Heart right ventricle (tissue), 16 donors: ENCODE measurements at regions of chr11 and their contacts with region 1.

Region 1: GRCh38 chr11:10857709-10858438 is at the start of gene ZBED5:
- DNase-seq: peak; percentile 97
- ATAC-seq: peak; percentile 96 to 98 (median 97)
- H3K4me3 ChIP-seq: peak within 1 kb of the TSS; percentile 70 to 89 (median 84)
- H3K27ac ChIP-seq: peak within 1 kb of the TSS; percentile 90 to 99 (median 98)
- H3K4me1 ChIP-seq: peaks cover 0 to 57% (median 26%) of the 10 kb centered on the region in 9 donors
- H3K27me3 ChIP-seq: no peaks in the 10 kb centered on the region
- CTCF ChIP-seq: peak in 7 of 9 donors; percentile 8 to 41 (median 20)
- total RNA-seq, gene ZBED5: 31.4 to 46.3 (median 39.6) TPM

Region 2: GRCh38 chr11:10800292-10800691 is 57.6 kb before region 1 on chr11:
- intact Hi-C with region 1: loop called in 2 of 10 experiments (anchors 5 to 10 kb)
- DNase-seq: no peak
- ATAC-seq: no peak
- H3K4me3 ChIP-seq: no peak overlapping the region
- H3K27ac ChIP-seq: no peak overlapping the region
- H3K4me1 ChIP-seq: peaks cover 3 to 83% (median 42%) of the 10 kb centered on the region in 9 donors
- H3K27me3 ChIP-seq: no peaks in the 10 kb centered on the region
- CTCF ChIP-seq: no peak

Region 3: GRCh38 chr11:10818594-10818993 is 39.3 kb before region 1 on chr11:
- intact Hi-C with region 1: no loop called
- DNase-seq: no peak
- ATAC-seq: no peak
- H3K4me3 ChIP-seq: no peak overlapping the region
- H3K27ac ChIP-seq: no peak overlapping the region
- H3K4me1 ChIP-seq: peaks cover 0 to 6% (median 0%) of the 10 kb centered on the region in 9 donors
- H3K27me3 ChIP-seq: no peaks in the 10 kb centered on the region
- CTCF ChIP-seq: no peak

Region 4: DNA sequence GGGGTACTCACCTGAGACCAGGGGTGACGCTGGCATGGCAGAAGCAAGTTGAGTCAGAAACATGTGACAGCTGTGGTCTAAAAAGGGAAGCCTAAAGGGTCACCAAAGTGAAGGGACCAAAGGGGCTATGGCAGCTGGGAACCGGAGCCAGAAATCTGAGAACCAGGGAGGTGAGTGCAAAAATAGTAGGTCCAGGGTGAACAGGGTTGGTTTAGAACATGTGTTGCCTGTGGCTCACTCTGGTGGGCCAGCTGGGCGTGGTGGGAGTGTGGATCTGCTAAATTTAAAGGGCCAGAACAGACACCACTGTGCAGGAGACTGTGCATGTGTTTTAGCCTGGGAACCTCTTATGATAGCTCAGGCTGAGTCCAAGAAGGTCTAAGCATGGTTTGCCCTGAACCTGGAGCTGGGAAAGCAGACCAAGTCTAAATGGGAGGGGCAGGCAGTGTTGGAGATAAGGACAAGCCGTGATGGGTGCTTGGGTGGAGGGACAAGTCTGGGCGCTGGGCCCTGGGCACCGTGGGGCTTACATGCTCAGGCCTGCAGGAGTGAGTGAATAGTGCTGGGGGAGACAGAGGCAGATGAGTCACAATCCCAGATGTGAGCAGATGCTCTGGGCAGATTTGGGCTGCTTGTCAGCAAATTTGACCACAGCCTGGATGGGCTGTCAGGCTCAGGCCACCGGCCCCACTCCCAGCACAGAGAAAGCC is 41.4 kb after region 1 on chr11:
- intact Hi-C with region 1: loop called in 5 of 10 experiments (anchors 2 to 10 kb)
- DNase-seq: peak; percentile 46 to 57
- ATAC-seq: peak; percentile 18 to 78 (median 64)
- H3K4me3 ChIP-seq: peak overlapping the region in 1 of 10 donors; percentile 6
- H3K27ac ChIP-seq: peak overlapping the region; percentile 78 to 96 (median 92)
- H3K4me1 ChIP-seq: peaks cover 18 to 59% (median 41%) of the 10 kb centered on the region in 9 donors
- H3K27me3 ChIP-seq: no peaks in the 10 kb centered on the region
- CTCF ChIP-seq: no peak

Region 5: GRCh38 chr11:10906513-10906912 is 48.6 kb after region 1 on chr11:
- intact Hi-C with region 1: loop called in 7 of 10 experiments (anchors 2 to 10 kb)
- DNase-seq: no peak
- ATAC-seq: peak in 7 of 8 donors; percentile 9 to 66 (median 41)
- H3K4me3 ChIP-seq: no peak overlapping the region
- H3K27ac ChIP-seq: no peak overlapping the region
- H3K4me1 ChIP-seq: peaks cover 0 to 29% (median 9%) of the 10 kb centered on the region in 9 donors
- H3K27me3 ChIP-seq: no peaks in the 10 kb centered on the region
- CTCF ChIP-seq: peak in 6 of 9 donors; percentile 21 to 54 (median 34)

Region 6: GRCh38 chr11:10925144-10925926 is 67.5 kb after region 1 on chr11:
- intact Hi-C with region 1: loop called in 3 of 10 experiments (anchors 2 to 5 kb)
- DNase-seq: no peak
- ATAC-seq: peak in 2 of 8 donors; percentile 31 to 39
- H3K4me3 ChIP-seq: no peak overlapping the region
- H3K27ac ChIP-seq: peak overlapping the region in 1 of 10 donors; percentile 17
- H3K4me1 ChIP-seq: peaks cover 0 to 27% (median 5%) of the 10 kb centered on the region in 9 donors
- H3K27me3 ChIP-seq: peaks cover 0 to 11% (median 0%) of the 10 kb centered on the region in 7 donors
- CTCF ChIP-seq: no peak

Region 7: GRCh38 chr11:10933455-10934292 is 75.8 kb after region 1 on chr11:
- intact Hi-C with region 1: loop called in 3 of 10 experiments (anchors 2 to 5 kb)
- DNase-seq: peak; percentile 87 to 91
- ATAC-seq: peak; percentile 78 to 93 (median 89)
- H3K4me3 ChIP-seq: peak overlapping the region; percentile 7 to 56 (median 52)
- H3K27ac ChIP-seq: peak overlapping the region; percentile 28 to 89 (median 72)
- H3K4me1 ChIP-seq: peaks cover 0 to 33% (median 17%) of the 10 kb centered on the region in 9 donors
- H3K27me3 ChIP-seq: peaks cover 0 to 49% (median 0%) of the 10 kb centered on the region in 7 donors
- CTCF ChIP-seq: peak; percentile 90 to 99 (median 95)

Region 8: DNA sequence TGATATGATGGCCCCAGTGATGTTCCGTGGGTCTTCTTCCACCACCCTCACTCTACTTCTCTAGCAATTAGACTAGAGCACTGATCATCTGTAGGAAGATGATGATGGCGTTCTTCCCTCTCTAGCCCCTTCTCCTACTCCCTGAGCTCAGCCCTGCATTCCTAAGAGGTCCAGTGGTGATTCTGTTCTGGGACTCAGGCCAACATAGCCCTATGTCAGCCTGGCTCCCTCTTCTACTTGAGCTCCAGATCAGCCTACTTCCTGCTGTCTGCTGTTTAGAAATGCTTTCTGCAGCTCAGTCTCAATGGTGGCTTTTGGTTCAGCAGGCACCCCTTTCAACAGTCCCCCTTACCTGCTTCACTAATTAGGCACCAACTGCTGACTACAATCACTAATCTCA is 86.1 kb after region 1 on chr11:
- intact Hi-C with region 1: no loop called
- DNase-seq: no peak
- ATAC-seq: peak in 4 of 8 donors; percentile 22 to 52 (median 42)
- H3K4me3 ChIP-seq: no peak overlapping the region
- H3K27ac ChIP-seq: no peak overlapping the region
- H3K4me1 ChIP-seq: peaks cover 0 to 9% (median 0%) of the 10 kb centered on the region in 9 donors
- H3K27me3 ChIP-seq: no peaks in the 10 kb centered on the region
- CTCF ChIP-seq: no peak